Dendritic cell treated with granulocyte-macrophage colony-stimulating factor and Interleukin-4, amounts not matched to agents 40 ng/mL and 50 ng/mL, for 4 days (primary cell): ENCODE measurements at regions of chr9 and their contacts with region 1.

Region 1: GRCh38 chr9:4382722-4383317 is 83.0 kb upstream of the GLIS3 start:
- H3K4me3 Mint-ChIP-seq: no peak overlapping the region
- H3K27ac Mint-ChIP-seq: no peak overlapping the region
- H3K4me1 Mint-ChIP-seq: no peaks in the 10 kb centered on the region
- H3K27me3 Mint-ChIP-seq: no peaks in the 10 kb centered on the region

Region 2: DNA sequence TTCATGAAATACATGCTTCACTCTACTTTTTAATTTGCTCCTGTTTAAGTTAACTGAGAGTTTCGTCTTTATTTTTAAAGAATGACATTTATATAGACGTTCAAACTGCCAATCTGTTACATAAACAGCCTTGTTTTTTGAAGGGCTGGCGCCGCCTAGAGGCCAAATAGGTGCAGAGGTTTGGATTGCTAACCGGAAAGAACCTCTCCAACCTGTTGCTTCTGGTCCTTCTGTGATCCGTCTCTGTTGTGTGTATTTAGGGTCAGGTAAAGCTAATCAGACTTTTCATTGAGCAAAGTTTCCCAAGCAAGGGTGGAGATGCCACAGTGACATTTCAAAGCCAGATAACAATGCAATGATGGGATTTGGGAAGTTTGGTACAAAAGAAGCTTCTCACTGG is 43.5 kb before region 1 on chr9:
- intact Hi-C with region 1: no loop called
- H3K4me3 Mint-ChIP-seq: no peak overlapping the region
- H3K27ac Mint-ChIP-seq: no peak overlapping the region
- H3K4me1 Mint-ChIP-seq: no peaks in the 10 kb centered on the region
- H3K27me3 Mint-ChIP-seq: no peaks in the 10 kb centered on the region

Region 3: DNA sequence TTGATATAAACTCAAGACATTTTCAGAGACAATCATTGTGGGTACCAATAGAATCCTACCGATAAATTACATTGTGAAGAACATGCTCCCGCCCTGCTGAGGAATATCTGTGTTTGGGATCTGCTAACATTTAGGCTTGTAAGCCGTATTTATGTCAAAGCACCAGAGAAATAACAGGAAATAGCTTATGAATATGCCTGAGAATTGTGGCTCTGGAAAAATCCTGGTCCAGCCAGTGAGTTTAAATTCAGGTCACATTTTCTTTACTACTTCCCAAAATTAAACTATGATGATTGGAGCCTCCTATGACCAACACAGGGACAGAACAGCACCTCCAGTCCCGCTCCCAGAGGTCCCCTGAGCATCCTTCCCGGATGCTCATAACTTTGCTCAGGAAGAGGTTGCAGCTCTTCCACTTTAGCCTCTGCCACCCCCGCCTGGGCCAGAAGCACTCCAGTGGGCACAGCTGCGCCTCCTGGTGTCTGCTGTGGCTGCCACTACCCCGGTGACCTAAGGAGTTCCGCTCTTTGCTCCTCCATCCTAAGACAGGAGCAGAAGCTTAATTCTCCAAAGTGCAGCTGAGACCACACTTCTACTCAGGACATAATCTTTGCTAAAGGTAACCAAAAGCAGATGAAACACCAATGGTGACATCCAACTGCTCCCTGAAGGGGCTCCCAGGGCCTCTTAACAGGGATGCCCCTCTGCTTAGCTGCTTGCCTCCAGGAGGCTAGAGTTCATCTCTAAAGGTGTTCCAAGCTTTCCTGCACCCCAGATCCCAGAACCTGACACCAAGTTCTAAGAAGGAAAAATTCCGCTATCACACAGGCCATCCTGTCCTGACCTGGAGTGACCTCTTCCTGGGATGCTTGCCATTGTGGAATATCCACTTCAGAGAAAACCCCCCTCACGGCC is 166.2 kb after region 1 on chr9:
- intact Hi-C with region 1: loop called (anchors 5 kb)
- H3K4me3 Mint-ChIP-seq: no peak overlapping the region
- H3K27ac Mint-ChIP-seq: no peak overlapping the region
- H3K4me1 Mint-ChIP-seq: no peaks in the 10 kb centered on the region
- H3K27me3 Mint-ChIP-seq: no peaks in the 10 kb centered on the region

Region 4: DNA sequence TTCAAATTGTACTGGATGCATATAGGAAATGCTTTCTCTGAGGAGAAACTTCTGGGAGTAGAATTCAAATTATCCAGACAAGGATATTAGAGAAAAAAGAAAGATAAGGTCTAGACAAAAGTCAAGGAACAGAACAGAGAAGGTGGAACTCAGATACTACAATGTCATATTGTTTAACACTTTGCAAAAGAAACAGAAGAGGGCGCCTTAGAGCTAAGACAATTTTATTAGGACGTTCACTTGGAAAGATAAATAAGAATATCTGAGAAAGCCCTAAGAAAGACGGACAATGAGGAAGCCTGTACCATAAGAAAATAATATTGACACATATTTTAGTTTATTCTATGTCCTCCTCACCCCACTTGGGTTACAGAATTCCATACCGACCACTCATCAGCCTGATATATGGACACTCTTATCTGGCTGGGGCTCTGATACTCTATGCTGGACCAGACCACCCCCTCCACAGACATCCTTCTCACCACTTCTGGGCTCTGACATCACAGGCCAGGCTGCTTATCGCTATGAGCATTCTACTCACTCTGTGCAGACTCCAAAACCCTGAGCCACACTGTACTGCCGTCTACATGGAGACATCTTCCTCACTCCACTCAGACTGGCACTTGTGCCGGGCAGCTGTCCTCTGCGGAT is 367.3 kb after region 1 on chr9:
- intact Hi-C with region 1: loop called (anchors 10 kb)
- H3K4me3 Mint-ChIP-seq: no peak overlapping the region
- H3K27ac Mint-ChIP-seq: no peak overlapping the region
- H3K4me1 Mint-ChIP-seq: peaks cover 8% of the 10 kb centered on the region
- H3K27me3 Mint-ChIP-seq: peaks cover 4% of the 10 kb centered on the region